Prostate gland (tissue), 2 donors: ENCODE measurements at regions of chr2 and their contacts with region 1.

Region 1: DNA sequence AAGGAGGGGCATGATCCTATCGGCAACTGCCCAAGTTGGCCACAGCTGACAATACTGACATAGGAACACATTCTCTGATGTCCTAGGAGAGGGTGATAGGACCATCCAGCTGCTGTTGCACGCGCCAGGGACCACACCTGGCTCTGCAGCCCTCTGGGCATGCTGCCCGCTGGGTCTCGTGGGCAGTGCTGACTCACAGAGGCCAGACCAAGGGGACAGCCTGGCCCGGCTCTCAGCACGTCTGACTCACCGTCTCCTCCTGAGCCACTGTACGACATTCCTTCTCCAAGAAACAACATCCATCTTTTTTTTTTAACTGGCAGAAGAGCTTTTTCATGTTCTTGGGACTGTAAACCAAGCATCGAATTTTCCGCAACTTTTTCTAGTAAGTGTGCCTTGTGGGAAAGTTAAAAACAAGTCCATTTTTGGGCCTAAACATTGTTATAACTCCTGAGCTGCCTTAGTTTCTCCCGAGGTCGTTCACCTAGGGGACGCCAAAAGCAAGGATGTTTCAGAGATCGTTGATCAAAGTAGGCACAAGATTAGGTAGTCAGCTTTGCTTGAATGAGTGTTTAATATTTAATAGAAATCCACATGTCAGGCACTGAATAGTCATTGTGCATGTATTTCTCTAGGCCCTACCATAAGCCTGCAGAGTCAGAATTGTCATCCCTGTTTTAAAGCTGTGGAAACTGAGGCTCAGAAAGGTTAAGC is 100.3 kb downstream of the TTC32 start:
- DNase-seq: peak; percentile 25
- H3K4me3 ChIP-seq: no peak overlapping the region
- H3K27ac ChIP-seq: no peak overlapping the region
- H3K4me1 ChIP-seq: peaks cover 15% of the 10 kb centered on the region
- H3K27me3 ChIP-seq: no peaks in the 10 kb centered on the region
- CTCF ChIP-seq: no peak
- POLR2A ChIP-seq: no peak

Region 2: GRCh38 chr2:19490846-19491435 is 310.6 kb before region 1 on chr2:
- intact Hi-C with region 1: no loop called
- DNase-seq: no peak
- H3K4me3 ChIP-seq: no peak overlapping the region
- H3K27ac ChIP-seq: no peak overlapping the region
- H3K4me1 ChIP-seq: no peaks in the 10 kb centered on the region
- H3K27me3 ChIP-seq: no peaks in the 10 kb centered on the region
- CTCF ChIP-seq: no peak
- POLR2A ChIP-seq: no peak

Region 3: GRCh38 chr2:19746611-19747309 is 54.8 kb before region 1 on chr2:
- intact Hi-C with region 1: no loop called
- DNase-seq: no peak
- H3K4me3 ChIP-seq: no peak overlapping the region
- H3K27ac ChIP-seq: no peak overlapping the region
- H3K4me1 ChIP-seq: no peaks in the 10 kb centered on the region
- H3K27me3 ChIP-seq: no peaks in the 10 kb centered on the region
- CTCF ChIP-seq: peak in 1 of 4 experiments; percentile 11
- POLR2A ChIP-seq: no peak

Region 4: DNA sequence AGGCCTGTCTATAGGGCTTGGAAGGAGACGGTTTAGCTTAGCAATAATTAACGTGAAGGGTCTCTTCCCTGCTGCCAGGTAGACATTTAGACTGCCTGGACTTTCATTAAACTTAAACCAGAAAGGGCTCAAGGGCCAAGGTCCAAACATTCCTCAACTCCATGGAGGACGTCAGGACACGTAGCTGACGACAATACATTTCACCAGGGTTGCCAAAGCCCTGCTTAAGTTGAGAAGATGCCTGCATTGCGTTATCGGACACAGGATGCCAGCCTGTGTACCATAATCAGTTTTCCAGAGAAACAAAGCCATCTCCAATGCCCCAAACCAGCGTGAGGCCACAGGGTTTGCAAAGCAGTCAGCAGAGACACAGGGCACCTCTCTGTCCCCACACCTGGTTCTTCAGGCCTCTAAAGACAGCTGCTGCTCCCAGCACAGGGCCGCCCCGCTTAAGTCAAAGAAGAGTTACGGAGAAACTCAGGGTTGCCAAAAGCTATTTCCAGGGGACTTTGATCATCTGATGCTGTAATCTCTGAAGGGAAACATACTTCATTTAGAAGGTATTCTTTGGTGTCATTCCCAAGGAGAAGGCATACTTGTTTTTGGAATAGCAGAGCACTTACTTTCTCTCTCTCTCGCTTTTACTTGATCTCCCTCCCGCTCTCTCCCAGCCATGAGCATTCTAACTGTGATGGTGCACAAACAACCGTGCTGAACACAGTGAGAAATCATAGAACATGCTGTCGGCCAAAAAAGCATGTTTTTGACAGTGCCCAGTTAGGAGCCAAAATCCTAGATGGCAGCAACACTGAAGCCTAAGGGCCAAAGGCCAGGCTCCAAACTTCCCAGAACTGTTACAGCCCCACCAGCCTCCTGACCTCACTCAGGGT is 54.3 kb after region 1 on chr2:
- intact Hi-C with region 1: loop called (anchors 5 kb)
- DNase-seq: no peak
- H3K4me3 ChIP-seq: no peak overlapping the region
- H3K27ac ChIP-seq: peak overlapping the region in 1 of 2 donors; percentile 21
- H3K4me1 ChIP-seq: no peaks in the 10 kb centered on the region
- H3K27me3 ChIP-seq: no peaks in the 10 kb centered on the region
- CTCF ChIP-seq: no peak
- POLR2A ChIP-seq: no peak

Region 5: DNA sequence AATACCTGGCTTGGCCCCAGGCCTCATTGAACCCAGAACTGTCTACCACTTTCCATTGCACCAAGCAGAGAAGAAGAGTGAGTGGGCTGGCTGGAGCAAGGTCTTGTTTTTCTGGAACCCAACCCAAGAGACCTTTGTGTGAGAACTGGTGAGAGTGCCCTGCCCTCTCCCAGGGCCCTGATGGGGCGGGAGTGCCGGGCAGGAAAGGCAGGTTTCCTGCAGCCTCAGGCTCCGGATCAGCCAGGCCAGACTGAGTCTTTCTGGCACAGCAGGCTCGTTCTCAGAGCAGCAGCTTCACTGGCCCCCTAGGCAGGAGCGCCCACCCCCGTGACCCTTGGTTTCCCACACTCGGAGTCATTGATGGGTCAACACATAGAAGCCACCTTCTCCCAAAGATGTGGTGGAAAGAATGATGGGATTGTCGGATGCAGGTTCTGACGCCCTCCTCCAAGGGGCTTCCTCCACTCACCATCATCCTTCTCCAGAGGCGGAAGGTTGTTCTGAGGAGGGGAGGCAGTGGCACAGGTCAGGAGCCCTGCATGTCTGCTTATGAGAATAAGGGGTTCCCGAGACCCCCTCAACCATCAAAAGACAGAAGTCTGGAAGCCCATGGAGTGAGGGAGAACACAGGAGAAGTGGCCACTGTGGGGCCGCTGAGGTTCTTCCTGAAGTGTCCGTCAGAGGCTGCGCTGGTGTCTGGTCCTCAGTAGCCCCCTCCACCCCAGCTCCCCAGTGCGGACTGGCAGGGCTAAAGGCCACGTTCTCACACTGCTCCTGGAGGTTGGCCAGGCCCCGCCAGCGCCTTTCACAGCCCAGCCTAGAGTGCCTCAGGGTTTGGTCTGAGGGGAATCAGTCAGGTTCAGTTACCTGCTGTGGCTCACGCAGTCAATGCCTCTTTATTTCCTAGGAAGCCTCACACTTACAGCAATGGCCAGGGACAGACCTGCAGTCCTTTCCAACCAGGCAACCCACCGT is 312.7 kb after region 1 on chr2:
- intact Hi-C with region 1: no loop called
- DNase-seq: no peak
- H3K4me3 ChIP-seq: no peak overlapping the region
- H3K27ac ChIP-seq: no peak overlapping the region
- H3K4me1 ChIP-seq: no peaks in the 10 kb centered on the region
- H3K27me3 ChIP-seq: no peaks in the 10 kb centered on the region
- CTCF ChIP-seq: no peak
- POLR2A ChIP-seq: no peak